ENCODE measurements at regions of chr7 and their contacts with region 1.

Region 1: GRCh38 chr7:117127585-117128168 is 174.4 kb downstream of the ST7 start:
- DNase-seq: peak; percentile 74
- H3K4me3 ChIP-seq: no peak overlapping the region
- H3K27ac ChIP-seq: no peak overlapping the region
- H3K4me1 ChIP-seq: peaks cover 29% of the 10 kb centered on the region
- H3K27me3 ChIP-seq: no peaks in the 10 kb centered on the region
- CTCF ChIP-seq: peak; percentile 41 to 45
- POLR2A ChIP-seq: no peak

Region 2: DNA sequence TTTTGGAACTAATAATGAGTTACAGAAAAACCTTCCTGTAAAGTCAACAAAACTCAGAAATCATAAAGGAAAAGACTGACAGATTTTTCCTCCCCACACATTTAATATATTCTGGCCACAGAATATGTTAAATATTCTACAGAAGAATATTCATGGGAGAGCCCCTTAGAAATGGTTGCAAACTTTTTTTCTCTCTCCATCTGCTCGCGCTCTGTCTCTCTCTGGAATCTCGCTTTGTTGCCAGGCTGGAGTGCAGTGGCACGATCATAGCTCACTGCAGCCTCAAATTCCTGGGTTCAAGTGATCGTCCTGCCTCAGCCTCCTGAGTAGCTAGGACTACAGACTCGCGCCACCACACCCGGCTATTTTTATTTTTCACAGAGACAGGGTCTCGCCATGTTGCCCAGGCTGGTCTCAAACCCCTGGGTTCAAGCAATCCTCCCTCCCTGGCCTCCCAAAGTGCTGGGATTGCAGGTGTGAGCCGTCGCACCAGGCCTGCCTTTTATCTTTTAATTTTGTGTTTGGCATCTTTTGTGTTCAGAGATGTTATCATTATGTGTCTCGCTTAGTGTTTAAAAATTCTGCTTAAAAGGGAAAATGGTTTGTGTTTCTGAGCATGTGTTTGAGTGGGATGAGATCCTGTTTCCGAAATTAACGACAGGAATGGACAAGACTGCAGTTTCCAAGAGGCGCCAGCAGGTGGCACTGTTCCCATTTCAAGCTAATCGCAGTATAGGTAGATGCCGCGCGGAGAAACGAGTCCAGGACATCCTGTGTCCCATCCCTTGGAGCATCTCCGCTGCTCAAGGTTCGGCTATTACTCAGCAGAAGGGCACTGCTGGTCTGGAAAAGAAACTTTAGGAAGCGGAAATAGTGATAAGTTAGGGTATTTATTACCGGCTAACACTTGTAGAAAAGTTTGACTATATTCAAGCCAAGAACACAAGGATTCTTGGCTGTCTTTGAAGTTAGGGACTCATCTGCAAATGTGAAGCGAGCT is 197.5 kb before region 1 on chr7:
- CTCF ChIA-PET with region 1: interaction called, 272 read pairs
- POLR2A ChIA-PET with region 1: no interaction called
- dilution Hi-C with region 1: no loop called
- intact Hi-C with region 1: loop called (anchors 1 kb)
- DNase-seq: peak; percentile 73
- H3K4me3 ChIP-seq: no peak overlapping the region
- H3K27ac ChIP-seq: no peak overlapping the region
- H3K4me1 ChIP-seq: peaks cover 3% of the 10 kb centered on the region
- H3K27me3 ChIP-seq: peaks cover 0 to 1% of the 10 kb centered on the region in 2 experiments
- CTCF ChIP-seq: peak; percentile 85 to 93
- POLR2A ChIP-seq: no peak

Region 3: GRCh38 chr7:116953727-116954442 is 173.8 kb before region 1 on chr7:
- CTCF ChIA-PET with region 1: interaction called, 11 read pairs
- POLR2A ChIA-PET with region 1: no interaction called
- dilution Hi-C with region 1: no loop called
- intact Hi-C with region 1: no loop called
- DNase-seq: peak; percentile 80
- H3K4me3 ChIP-seq: peak overlapping the region; percentile 88 to 92 (median 89)
- H3K27ac ChIP-seq: peak overlapping the region; percentile 95
- H3K4me1 ChIP-seq: peaks cover 24% of the 10 kb centered on the region
- H3K27me3 ChIP-seq: no peaks in the 10 kb centered on the region
- CTCF ChIP-seq: no peak
- POLR2A ChIP-seq: peak; percentile 48

Region 4: DNA sequence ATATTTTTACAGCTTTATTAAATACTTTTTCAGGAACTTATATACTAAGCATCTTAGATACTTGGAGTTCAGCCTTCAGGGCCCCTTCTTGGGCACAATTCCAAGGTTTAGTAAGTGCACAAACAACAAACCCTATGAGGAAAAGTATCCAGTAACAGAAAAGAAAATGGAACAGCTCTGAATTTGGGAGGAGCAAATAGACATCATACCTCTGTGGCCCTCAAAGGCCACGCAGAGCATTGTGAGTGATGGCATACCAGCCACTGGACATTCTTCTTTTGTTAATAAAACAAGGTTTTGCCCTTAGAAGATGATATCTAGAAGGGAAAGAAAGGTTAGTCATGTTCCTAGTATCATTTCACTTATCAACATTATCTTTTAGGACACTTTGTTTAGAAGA is 128.4 kb before region 1 on chr7:
- CTCF ChIA-PET with region 1: interaction called, 16 read pairs
- POLR2A ChIA-PET with region 1: no interaction called
- dilution Hi-C with region 1: no loop called
- intact Hi-C with region 1: no loop called
- DNase-seq: no peak
- H3K4me3 ChIP-seq: no peak overlapping the region
- H3K27ac ChIP-seq: no peak overlapping the region
- H3K4me1 ChIP-seq: no peaks in the 10 kb centered on the region
- H3K27me3 ChIP-seq: no peaks in the 10 kb centered on the region
- CTCF ChIP-seq: no peak
- POLR2A ChIP-seq: no peak

Region 5: GRCh38 chr7:117019786-117020590 is 107.7 kb before region 1 on chr7:
- CTCF ChIA-PET with region 1: interaction called, 10 read pairs
- POLR2A ChIA-PET with region 1: no interaction called
- dilution Hi-C with region 1: no loop called
- intact Hi-C with region 1: no loop called
- DNase-seq: peak; percentile 91
- H3K4me3 ChIP-seq: peak overlapping the region in 1 of 3 experiments; percentile 44
- H3K27ac ChIP-seq: peak overlapping the region; percentile 62
- H3K4me1 ChIP-seq: peaks cover 18% of the 10 kb centered on the region
- H3K27me3 ChIP-seq: no peaks in the 10 kb centered on the region
- CTCF ChIP-seq: no peak
- POLR2A ChIP-seq: no peak

Region 6: DNA sequence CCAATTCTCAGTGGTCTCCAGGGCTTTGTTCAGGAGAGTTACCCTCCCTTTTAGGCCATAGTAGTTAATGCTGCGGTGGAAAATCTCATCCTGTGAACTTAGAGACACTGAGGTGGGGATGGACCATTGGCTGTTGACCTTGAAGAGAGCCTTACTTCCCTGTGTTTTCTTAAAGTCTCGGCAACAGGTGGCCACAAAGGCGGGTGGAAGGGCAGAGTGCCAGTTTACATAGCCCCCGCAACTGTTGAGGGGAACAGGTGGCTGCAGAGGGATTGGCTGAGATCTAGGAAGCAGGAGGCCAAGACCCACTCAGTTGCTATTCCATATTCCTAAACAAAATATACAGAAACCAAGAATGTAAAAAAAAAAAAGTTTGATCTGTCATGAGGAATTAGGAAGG is 13.8 kb before region 1 on chr7:
- CTCF ChIA-PET with region 1: interaction called, 26 read pairs
- POLR2A ChIA-PET with region 1: no interaction called
- dilution Hi-C with region 1: no loop called
- intact Hi-C with region 1: no loop called
- DNase-seq: no peak
- H3K4me3 ChIP-seq: no peak overlapping the region
- H3K27ac ChIP-seq: no peak overlapping the region
- H3K4me1 ChIP-seq: peaks cover 19% of the 10 kb centered on the region
- H3K27me3 ChIP-seq: no peaks in the 10 kb centered on the region
- CTCF ChIP-seq: no peak
- POLR2A ChIP-seq: no peak

Region 7: GRCh38 chr7:117385340-117386109 is 257.8 kb after region 1 on chr7:
- CTCF ChIA-PET with region 1: interaction called, 5 read pairs
- POLR2A ChIA-PET with region 1: no interaction called
- dilution Hi-C with region 1: no loop called
- intact Hi-C with region 1: loop called (anchors 10 kb)
- DNase-seq: peak; percentile 47
- H3K4me3 ChIP-seq: no peak overlapping the region
- H3K27ac ChIP-seq: no peak overlapping the region
- H3K4me1 ChIP-seq: no peaks in the 10 kb centered on the region
- H3K27me3 ChIP-seq: no peaks in the 10 kb centered on the region
- CTCF ChIP-seq: peak in 1 of 2 donors; percentile 10
- POLR2A ChIP-seq: no peak